Right cardiac atrium (tissue), 5 donors: ENCODE measurements at regions of chr16 and their contacts with region 1.

Region 1: DNA sequence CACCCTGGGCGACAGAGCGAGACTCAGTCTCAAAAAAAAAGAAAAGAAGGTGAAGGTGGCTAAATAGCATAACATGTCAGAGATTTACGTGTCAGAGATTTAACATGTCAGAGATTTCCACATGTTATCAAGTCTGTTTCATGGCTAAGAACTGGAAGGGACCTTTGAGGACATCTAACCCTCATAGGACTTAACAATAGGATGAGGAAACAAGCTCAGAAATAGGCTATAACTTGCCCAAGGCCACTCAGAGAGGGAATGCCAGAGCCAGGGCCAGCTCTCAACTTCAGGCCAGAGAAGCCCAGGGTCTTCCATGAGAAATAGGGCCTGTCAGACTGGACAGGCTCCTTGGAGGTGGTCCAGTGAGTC is 26.8 kb upstream of the ZNF629 start:
- DNase-seq: no peak
- ATAC-seq: no peak
- H3K4me3 ChIP-seq: peak overlapping the region; percentile 38
- H3K27ac ChIP-seq: peak overlapping the region; percentile 65
- H3K4me1 ChIP-seq: no peaks in the 10 kb centered on the region
- H3K27me3 ChIP-seq: no peaks in the 10 kb centered on the region

Region 2: GRCh38 chr16:30874821-30875717 is 61.3 kb after region 1 on chr16:
- intact Hi-C with region 1: loop called in 1 of 4 experiments (anchors 10 kb)
- DNase-seq: peak; percentile 94 to 97 (median 97)
- ATAC-seq: peak; percentile 99
- H3K4me3 ChIP-seq: peak overlapping the region; percentile 86
- H3K27ac ChIP-seq: peak overlapping the region; percentile 94
- H3K4me1 ChIP-seq: peaks cover 6% of the 10 kb centered on the region
- H3K27me3 ChIP-seq: no peaks in the 10 kb centered on the region